ENCODE measurements at regions of chr15 and their contacts with region 1.

Region 1: DNA sequence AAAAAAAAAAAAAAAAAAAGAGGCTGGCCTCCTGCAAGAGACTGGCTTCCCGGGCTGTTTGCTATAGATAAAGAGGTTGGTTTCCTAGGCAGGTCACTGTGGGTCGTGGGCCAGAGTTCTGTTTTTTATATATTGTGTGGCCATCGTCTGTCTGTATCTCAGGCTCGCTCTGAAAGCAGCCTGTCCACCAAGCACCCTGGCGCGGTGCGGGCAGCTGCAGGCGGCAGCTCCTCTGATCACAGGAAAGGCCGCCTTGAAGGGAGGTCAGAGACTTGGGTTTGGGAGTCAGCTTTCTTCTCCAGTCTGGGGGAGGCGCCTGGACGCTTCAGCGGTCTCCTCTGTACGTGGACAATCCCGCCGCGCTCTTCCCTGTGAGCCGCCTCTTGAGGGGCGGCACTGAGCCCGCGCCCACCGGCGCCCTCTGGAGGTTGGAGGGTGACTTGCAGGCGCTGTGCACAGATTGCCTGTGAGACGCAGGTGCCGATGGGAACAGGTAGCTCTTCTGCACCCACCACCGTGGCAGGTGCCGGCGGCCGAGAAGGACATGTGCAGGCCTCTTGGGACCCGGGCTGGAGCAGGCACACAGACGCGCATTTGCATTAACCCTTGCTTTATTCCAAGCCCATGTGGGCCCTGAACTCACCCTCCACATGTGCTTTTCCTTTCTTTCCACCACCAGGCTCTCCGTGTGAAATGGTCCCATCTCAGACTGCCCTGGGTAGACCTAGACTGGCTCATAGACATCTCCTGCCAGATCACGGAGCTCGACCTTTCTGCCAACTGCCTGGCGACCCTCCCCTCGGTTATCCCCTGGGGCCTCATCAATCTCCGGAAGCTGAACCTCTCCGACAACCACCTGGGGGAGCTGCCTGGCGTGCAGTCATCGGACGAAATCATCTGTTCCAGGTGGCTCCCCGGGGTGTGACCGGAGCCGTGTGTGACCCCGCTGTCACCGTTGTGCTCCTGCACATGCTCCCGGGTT is 89.3 kb downstream of the LRRK1 start:
- DNase-seq: peak; percentile 67 to 92 (median 85)
- ATAC-seq: peak; percentile 97
- H3K4me3 ChIP-seq: peak overlapping the region; percentile 77
- H3K4me3 Mint-ChIP-seq: peak overlapping the region; percentile 84 to 96 (median 90)
- H3K27ac ChIP-seq: no peak overlapping the region
- H3K27ac Mint-ChIP-seq: peak overlapping the region in 3 of 9 donors; percentile 63 to 75 (median 68)
- H3K4me1 ChIP-seq: peaks cover 8 to 9% of the 10 kb centered on the region in 2 donors
- H3K4me1 Mint-ChIP-seq: peaks cover 9 to 25% (median 23%) of the 10 kb centered on the region in 7 donors
- H3K27me3 ChIP-seq: no peaks in the 10 kb centered on the region
- H3K27me3 Mint-ChIP-seq: peaks cover 0 to 29% (median 0%) of the 10 kb centered on the region in 5 donors

Region 2: GRCh38 chr15:100627789-100628395 is 380.6 kb before region 1 on chr15:
- CTCF ChIA-PET with region 1: interaction called, 9 read pairs
- POLR2A ChIA-PET with region 1: no interaction called
- intact Hi-C with region 1: loop called (anchors 1 kb)
- DNase-seq: peak; percentile 26 to 73 (median 63)
- ATAC-seq: peak; percentile 95
- H3K4me3 ChIP-seq: no peak overlapping the region
- H3K4me3 Mint-ChIP-seq: no peak overlapping the region
- H3K27ac ChIP-seq: no peak overlapping the region
- H3K27ac Mint-ChIP-seq: peak overlapping the region in 7 of 9 donors; percentile 10 to 57 (median 38)
- H3K4me1 ChIP-seq: no peaks in the 10 kb centered on the region
- H3K4me1 Mint-ChIP-seq: peaks cover 17 to 46% (median 33%) of the 10 kb centered on the region in 7 donors
- H3K27me3 ChIP-seq: no peaks in the 10 kb centered on the region
- H3K27me3 Mint-ChIP-seq: no peaks in the 10 kb centered on the region

Region 3: GRCh38 chr15:100849252-100850171 is 158.9 kb before region 1 on chr15:
- CTCF ChIA-PET with region 1: no interaction called
- POLR2A ChIA-PET with region 1: no interaction called
- intact Hi-C with region 1: loop called in 1 of 2 experiments (anchors 5 kb)
- DNase-seq: peak; percentile 25 to 67 (median 45)
- ATAC-seq: peak; percentile 93
- H3K4me3 ChIP-seq: peak overlapping the region; percentile 36
- H3K4me3 Mint-ChIP-seq: peak overlapping the region; percentile 82 to 91 (median 88)
- H3K27ac ChIP-seq: no peak overlapping the region
- H3K27ac Mint-ChIP-seq: peak overlapping the region in 8 of 9 donors; percentile 18 to 85 (median 62)
- H3K4me1 ChIP-seq: no peaks in the 10 kb centered on the region
- H3K4me1 Mint-ChIP-seq: peaks cover 0 to 13% (median 7%) of the 10 kb centered on the region in 7 donors
- H3K27me3 ChIP-seq: no peaks in the 10 kb centered on the region
- H3K27me3 Mint-ChIP-seq: peaks cover 0 to 33% (median 17%) of the 10 kb centered on the region in 5 donors

Region 4: GRCh38 chr15:100918034-100918689 is 90.3 kb before region 1 on chr15:
- CTCF ChIA-PET with region 1: interaction called, 37 read pairs
- POLR2A ChIA-PET with region 1: no interaction called
- intact Hi-C with region 1: loop called (anchors 1 kb)
- DNase-seq: peak in 8 of 9 donors; percentile 26 to 81 (median 52)
- ATAC-seq: peak; percentile 89
- H3K4me3 ChIP-seq: peak overlapping the region; percentile 53
- H3K4me3 Mint-ChIP-seq: peak overlapping the region; percentile 73 to 89 (median 84)
- H3K27ac ChIP-seq: no peak overlapping the region
- H3K27ac Mint-ChIP-seq: no peak overlapping the region
- H3K4me1 ChIP-seq: no peaks in the 10 kb centered on the region
- H3K4me1 Mint-ChIP-seq: peaks cover 9 to 29% (median 18%) of the 10 kb centered on the region in 7 donors
- H3K27me3 ChIP-seq: peaks cover 0 to 16% of the 10 kb centered on the region in 2 donors
- H3K27me3 Mint-ChIP-seq: peaks cover 63 to 77% (median 73%) of the 10 kb centered on the region in 5 donors

Region 5: GRCh38 chr15:101088788-101089583 is 80.5 kb after region 1 on chr15:
- CTCF ChIA-PET with region 1: interaction called, 3 read pairs
- POLR2A ChIA-PET with region 1: no interaction called
- intact Hi-C with region 1: loop called in 1 of 2 experiments (anchors 2 kb)
- DNase-seq: peak; percentile 45 to 89 (median 74)
- ATAC-seq: peak; percentile 92
- H3K4me3 ChIP-seq: no peak overlapping the region
- H3K4me3 Mint-ChIP-seq: peak overlapping the region in 2 of 10 donors; percentile 13 to 24
- H3K27ac ChIP-seq: no peak overlapping the region
- H3K27ac Mint-ChIP-seq: peak overlapping the region in 1 of 9 donors; percentile 49
- H3K4me1 ChIP-seq: no peaks in the 10 kb centered on the region
- H3K4me1 Mint-ChIP-seq: peaks cover 0 to 13% (median 0%) of the 10 kb centered on the region in 7 donors
- H3K27me3 ChIP-seq: no peaks in the 10 kb centered on the region
- H3K27me3 Mint-ChIP-seq: peaks cover 0 to 10% (median 4%) of the 10 kb centered on the region in 5 donors

Region 6: GRCh38 chr15:101251830-101252820 is 243.7 kb after region 1 on chr15 and contains the start of gene CHSY1:
- CTCF ChIA-PET with region 1: no interaction called
- POLR2A ChIA-PET with region 1: no interaction called
- intact Hi-C with region 1: loop called in 1 of 2 experiments (anchors 2 kb)
- DNase-seq: peak; percentile 71 to 91 (median 81)
- ATAC-seq: peak; percentile 91
- H3K4me3 ChIP-seq: peak within 1 kb of the TSS; percentile 64
- H3K4me3 Mint-ChIP-seq: peak within 1 kb of the TSS; percentile 84 to 97 (median 94)
- H3K27ac ChIP-seq: peak within 1 kb of the TSS; percentile 62
- H3K27ac Mint-ChIP-seq: peak within 1 kb of the TSS; percentile 77 to 96 (median 84)
- H3K4me1 ChIP-seq: peaks cover 17 to 21% of the 10 kb centered on the region in 2 donors
- H3K4me1 Mint-ChIP-seq: peaks cover 17 to 63% (median 37%) of the 10 kb centered on the region in 7 donors
- H3K27me3 ChIP-seq: no peaks in the 10 kb centered on the region
- H3K27me3 Mint-ChIP-seq: no peaks in the 10 kb centered on the region
- total RNA-seq, gene CHSY1: 8.9 to 47.0 (median 10.8) TPM

Measured in naive thymus-derived CD4-positive, alpha-beta T cell (primary cell).